Left ventricle myocardium inferior (tissue), 1 donor: ENCODE measurements at regions of chr4 and their contacts with region 1.

Region 1: GRCh38 chr4:13548984-13549546 is 4.8 kb upstream of the NKX3-2 start:
- DNase-seq: peak; percentile 74
- H3K4me3 ChIP-seq: peak overlapping the region; percentile 55
- H3K27ac ChIP-seq: no peak overlapping the region
- H3K4me1 ChIP-seq: peaks cover 39% of the 10 kb centered on the region
- H3K27me3 ChIP-seq: peaks cover 98% of the 10 kb centered on the region
- CTCF ChIP-seq: peak; percentile 89

Region 2: GRCh38 chr4:12852338-12853307 is 696.4 kb before region 1 on chr4:
- intact Hi-C with region 1: loop called (anchors 5 kb)
- DNase-seq: no peak
- H3K4me3 ChIP-seq: no peak overlapping the region
- H3K27ac ChIP-seq: no peak overlapping the region
- H3K4me1 ChIP-seq: peaks cover 3% of the 10 kb centered on the region
- H3K27me3 ChIP-seq: peaks cover 38% of the 10 kb centered on the region
- CTCF ChIP-seq: peak; percentile 71

Region 3: GRCh38 chr4:13007802-13008470 is 541.1 kb before region 1 on chr4:
- intact Hi-C with region 1: no loop called
- DNase-seq: no peak
- H3K4me3 ChIP-seq: no peak overlapping the region
- H3K27ac ChIP-seq: no peak overlapping the region
- H3K4me1 ChIP-seq: no peaks in the 10 kb centered on the region
- H3K27me3 ChIP-seq: no peaks in the 10 kb centered on the region
- CTCF ChIP-seq: no peak